A673 (cell line): ENCODE measurements at regions of chr9 and their contacts with region 1.

Region 1: GRCh38 chr9:100084734-100085133 is 14.1 kb downstream of the ERP44 start:
- DNase-seq: no peak
- H3K4me3 ChIP-seq: no peak overlapping the region
- H3K27ac ChIP-seq: no peak overlapping the region
- H3K4me1 ChIP-seq: peaks cover 11% of the 10 kb centered on the region
- H3K27me3 ChIP-seq: no peaks in the 10 kb centered on the region
- CTCF ChIP-seq: no peak

Region 2: DNA sequence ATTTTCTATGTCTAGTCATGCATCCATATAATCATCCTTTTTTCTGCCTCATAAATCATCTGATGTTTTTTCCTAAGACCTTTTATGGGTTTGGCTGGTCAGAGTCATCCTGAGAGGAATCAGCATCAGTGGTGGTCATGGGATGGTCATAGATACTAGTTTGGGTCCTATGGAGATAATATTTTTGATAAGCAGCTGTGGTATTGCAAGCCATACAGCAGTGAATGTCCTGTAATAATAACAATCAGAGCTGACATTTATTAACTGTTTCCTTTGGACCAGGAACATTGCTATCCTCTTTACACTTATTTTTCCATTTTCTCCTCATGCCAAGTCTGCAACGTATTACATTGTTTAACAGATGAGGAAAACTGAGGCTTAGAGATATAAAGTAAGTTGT is 184.9 kb after region 1 on chr9:
- CTCF ChIA-PET with region 1: no interaction called
- POLR2A ChIA-PET with region 1: interaction called, 14 read pairs
- intact Hi-C with region 1: no loop called
- DNase-seq: no peak
- H3K4me3 ChIP-seq: no peak overlapping the region
- H3K27ac ChIP-seq: no peak overlapping the region
- H3K4me1 ChIP-seq: no peaks in the 10 kb centered on the region
- H3K27me3 ChIP-seq: no peaks in the 10 kb centered on the region
- CTCF ChIP-seq: no peak